Gastrocnemius medialis (tissue), 4 donors: ENCODE measurements at regions of chr11 and their contacts with region 1.

Region 1: GRCh38 chr11:86818466-86819192 is 18.3 kb downstream of the PRSS23 start:
- DNase-seq: no peak
- ATAC-seq: peak in 1 of 2 donors; percentile 77
- H3K4me3 ChIP-seq: peak overlapping the region in 1 of 4 donors; percentile 13
- H3K27ac ChIP-seq: no peak overlapping the region
- H3K4me1 ChIP-seq: peaks cover 28 to 36% of the 10 kb centered on the region in 2 donors
- H3K27me3 ChIP-seq: no peaks in the 10 kb centered on the region
- CTCF ChIP-seq: peak; percentile 71 to 83 (median 76)
- POLR2A ChIP-seq: no peak

Region 2: GRCh38 chr11:85854557-85855340 is 963.9 kb before region 1 on chr11:
- in situ Hi-C with region 1: loop called in 1 of 4 experiments (anchors 25 kb)
- intact Hi-C with region 1: no loop called
- DNase-seq: peak; percentile 68 to 85
- ATAC-seq: peak; percentile 94 to 96
- H3K4me3 ChIP-seq: peak overlapping the region; percentile 54 to 71 (median 61)
- H3K27ac ChIP-seq: peak overlapping the region; percentile 78 to 91 (median 80)
- H3K4me1 ChIP-seq: peaks cover 4 to 5% of the 10 kb centered on the region in 2 donors
- H3K27me3 ChIP-seq: no peaks in the 10 kb centered on the region
- CTCF ChIP-seq: peak; percentile 84 to 99 (median 93)
- POLR2A ChIP-seq: peak in 1 of 2 donors; percentile 35

Region 3: DNA sequence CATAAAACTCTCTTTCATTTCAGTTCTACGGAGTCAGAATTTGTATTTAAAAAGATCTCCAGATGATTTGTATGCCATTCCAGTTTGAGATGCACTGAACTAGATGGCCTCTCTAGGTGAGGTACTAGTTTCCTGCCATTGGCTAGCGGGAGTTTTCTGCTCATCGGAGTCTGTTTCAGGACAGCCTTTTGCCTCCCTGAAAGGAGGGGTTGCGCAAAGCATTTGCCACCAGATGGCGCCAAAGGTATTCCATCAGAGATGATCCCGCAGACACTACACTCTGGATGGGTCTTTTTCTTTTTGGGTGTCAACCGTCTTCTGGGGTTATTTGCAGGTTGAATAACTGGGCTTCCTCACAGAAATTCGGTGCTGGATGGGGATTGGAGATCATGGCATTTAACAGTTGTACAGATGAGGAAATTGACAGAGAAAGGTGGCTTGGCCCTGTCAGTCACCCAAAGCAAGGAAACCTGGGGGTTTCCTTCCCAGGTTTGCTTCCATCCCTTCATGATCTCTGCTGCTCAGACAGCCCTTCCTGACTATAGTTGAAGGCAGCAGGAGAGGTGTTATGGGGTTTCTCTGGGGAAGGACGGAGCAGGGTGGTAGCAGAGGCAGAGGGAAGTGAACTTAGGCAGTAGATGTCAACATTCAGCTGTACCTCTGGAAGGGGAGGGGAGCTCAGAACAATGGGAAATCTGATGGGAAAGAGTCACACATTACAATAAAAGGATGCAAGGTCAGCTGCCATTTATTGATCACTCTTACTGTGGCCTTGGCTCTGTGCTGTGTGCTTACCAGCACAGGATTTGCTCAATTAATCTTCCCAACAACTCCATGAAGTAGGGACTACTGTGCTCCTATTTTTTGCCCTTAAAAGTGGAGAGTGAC is 362.3 kb before region 1 on chr11:
- in situ Hi-C with region 1: loop called (anchors 5 kb)
- intact Hi-C with region 1: loop called (anchors 1 kb)
- DNase-seq: peak; percentile 64 to 78
- ATAC-seq: peak; percentile 81 to 90
- H3K4me3 ChIP-seq: no peak overlapping the region
- H3K27ac ChIP-seq: peak overlapping the region in 1 of 4 donors; percentile 26
- H3K4me1 ChIP-seq: peaks cover 9 to 15% of the 10 kb centered on the region in 2 donors
- H3K27me3 ChIP-seq: no peaks in the 10 kb centered on the region
- CTCF ChIP-seq: peak; percentile 81 to 91 (median 85)
- POLR2A ChIP-seq: no peak

Region 4: GRCh38 chr11:86608251-86608799 is 210.3 kb before region 1 on chr11:
- in situ Hi-C with region 1: loop called in 3 of 4 experiments (anchors 5 to 10 kb)
- intact Hi-C with region 1: loop called (anchors 2 kb)
- DNase-seq: peak; percentile 40 to 71
- ATAC-seq: peak; percentile 95 to 98
- H3K4me3 ChIP-seq: peak overlapping the region; percentile 0 to 37 (median 18)
- H3K27ac ChIP-seq: peak overlapping the region in 2 of 4 donors; percentile 1 to 31
- H3K4me1 ChIP-seq: peaks cover 14 to 20% of the 10 kb centered on the region in 2 donors
- H3K27me3 ChIP-seq: no peaks in the 10 kb centered on the region
- CTCF ChIP-seq: peak; percentile 76 to 93 (median 84)
- POLR2A ChIP-seq: no peak

Region 5: DNA sequence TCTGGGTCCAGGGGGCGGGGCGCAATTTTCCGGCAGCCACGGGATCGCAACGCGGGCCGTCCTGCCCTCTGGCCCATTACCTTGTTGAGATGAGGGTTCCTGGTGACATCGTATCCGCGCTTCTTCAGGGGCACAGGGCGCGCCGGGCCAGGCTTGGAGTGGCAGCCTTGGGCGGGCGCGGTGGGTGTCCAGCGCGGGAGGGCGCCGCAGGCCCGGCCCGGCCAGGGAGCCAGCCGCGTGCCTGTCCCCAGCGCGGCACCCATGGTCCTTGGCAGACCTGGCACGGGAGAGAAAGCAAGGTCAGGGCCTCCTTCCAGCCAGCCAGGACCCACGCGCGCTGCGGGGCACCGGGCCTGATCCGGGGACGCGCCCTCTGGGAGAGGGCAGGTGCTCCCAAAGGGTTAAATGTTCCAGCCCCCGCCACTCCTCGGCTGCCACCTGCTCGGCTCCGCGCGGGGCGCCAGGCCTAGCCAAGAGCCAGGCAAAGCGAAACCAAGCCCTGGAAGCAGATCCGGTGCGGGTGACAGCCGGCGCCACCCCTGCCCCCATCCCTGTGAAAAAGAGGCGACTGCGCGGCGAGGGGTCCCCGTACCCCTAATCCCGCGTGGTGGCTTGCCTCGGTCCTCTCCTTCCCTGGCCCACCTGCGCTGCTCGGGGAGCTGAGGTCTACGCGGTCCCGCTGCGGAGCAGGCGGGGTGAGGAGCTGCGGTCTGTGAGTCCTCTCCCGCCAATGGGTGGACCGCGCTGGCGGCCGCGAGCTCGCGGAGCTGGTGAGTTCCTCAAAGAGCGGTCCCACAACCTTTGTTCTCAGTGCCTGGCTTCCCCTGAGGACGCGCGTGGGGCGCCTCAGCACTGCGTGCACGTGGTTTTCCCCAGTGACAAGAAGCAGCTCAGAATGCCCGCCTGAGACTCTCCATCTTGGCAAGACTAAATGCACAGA is 146.7 kb before region 1 on chr11 and contains the start of gene ME3:
- in situ Hi-C with region 1: loop called in 1 of 4 experiments (anchors 10 kb)
- intact Hi-C with region 1: no loop called
- DNase-seq: peak; percentile 53 to 75
- ATAC-seq: peak; percentile 79 to 80
- H3K4me3 ChIP-seq: peak within 1 kb of the TSS; percentile 64 to 95 (median 90)
- H3K27ac ChIP-seq: peak within 1 kb of the TSS; percentile 88 to 98 (median 96)
- H3K4me1 ChIP-seq: peaks cover 26 to 54% of the 10 kb centered on the region in 2 donors
- H3K27me3 ChIP-seq: no peaks in the 10 kb centered on the region
- CTCF ChIP-seq: peak in 1 of 5 experiments; percentile 22
- POLR2A ChIP-seq: peak; percentile 41 to 54
- total RNA-seq, gene ME3: 4.2 to 17.0 (median 15.7) TPM

Region 6: GRCh38 chr11:86869966-86870570 is 51.4 kb after region 1 on chr11:
- in situ Hi-C with region 1: no loop called
- intact Hi-C with region 1: no loop called
- DNase-seq: peak; percentile 17 to 24
- ATAC-seq: peak; percentile 82 to 84
- H3K4me3 ChIP-seq: no peak overlapping the region
- H3K27ac ChIP-seq: no peak overlapping the region
- H3K4me1 ChIP-seq: no peaks in the 10 kb centered on the region
- H3K27me3 ChIP-seq: no peaks in the 10 kb centered on the region
- CTCF ChIP-seq: peak; percentile 42 to 77 (median 70)
- POLR2A ChIP-seq: no peak